ENCODE measurements at regions of chr1 and their contacts with region 1.

Region 1: DNA sequence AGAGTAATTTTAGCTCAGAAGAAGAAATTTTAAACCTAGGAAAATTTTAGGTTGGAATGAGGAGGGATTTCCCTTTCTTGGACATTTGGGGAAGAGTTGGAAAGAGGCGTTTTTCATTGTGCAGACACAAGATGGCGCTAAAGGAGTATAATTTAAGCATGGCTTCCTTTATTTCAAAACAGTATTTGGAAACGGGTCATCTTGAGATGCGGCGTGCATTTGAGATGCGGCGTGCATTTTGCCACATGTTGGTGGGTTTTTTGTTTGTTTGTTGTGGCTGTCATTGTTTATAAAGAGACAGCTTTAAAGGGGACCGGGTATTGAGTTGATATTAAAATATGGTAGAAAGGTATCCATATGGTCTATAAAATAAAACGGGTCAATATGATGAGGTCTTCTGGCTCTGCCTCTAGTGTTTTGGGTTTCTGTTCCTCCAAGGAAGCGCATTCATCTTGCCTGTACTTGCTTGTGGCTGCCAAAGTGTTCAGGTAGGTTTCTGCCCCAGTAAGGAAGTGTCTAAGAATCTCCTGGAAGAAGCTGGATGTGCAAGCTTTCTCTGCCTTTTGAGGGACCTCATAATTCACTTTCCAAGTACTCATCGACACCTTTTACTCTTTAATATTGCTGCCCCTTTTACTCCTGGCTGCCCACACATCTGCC is 210.3 kb downstream of the SLC35F3 start:
- DNase-seq: no peak
- H3K4me3 ChIP-seq: no peak overlapping the region
- H3K27me3 ChIP-seq: no peaks in the 10 kb centered on the region; the same call in 1 of the 2 replicates
- CTCF ChIP-seq: peak; percentile 67

Region 2: DNA sequence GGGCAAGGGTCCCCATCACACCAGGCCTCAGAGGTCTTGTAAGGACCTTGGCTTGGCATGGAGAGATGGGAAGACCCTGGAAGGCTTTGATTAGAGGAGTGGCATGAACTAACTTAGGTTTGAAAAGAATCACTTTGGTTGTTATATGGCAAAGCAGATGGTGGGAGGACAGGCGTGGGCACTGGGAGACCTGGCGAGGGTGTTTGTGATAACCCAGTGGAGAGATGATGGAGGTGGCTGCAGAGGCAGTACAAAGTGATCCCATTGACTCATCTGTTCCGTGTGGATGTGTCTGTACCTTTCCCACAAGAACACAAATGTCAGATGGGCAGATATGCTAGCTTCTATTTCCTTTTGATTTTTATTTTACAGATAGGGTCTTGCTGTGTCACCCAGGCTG is 42.0 kb before region 1 on chr1:
- CTCF ChIA-PET with region 1: no interaction called
- POLR2A ChIA-PET with region 1: no interaction called
- DNase-seq: no peak
- H3K4me3 ChIP-seq: no peak overlapping the region
- H3K27me3 ChIP-seq: no peaks in the 10 kb centered on the region
- CTCF ChIP-seq: no peak

Region 3: GRCh38 chr1:234125283-234125682 is 10.5 kb after region 1 on chr1:
- CTCF ChIA-PET with region 1: interaction called, 26 read pairs
- POLR2A ChIA-PET with region 1: no interaction called
- DNase-seq: no peak
- H3K4me3 ChIP-seq: no peak overlapping the region
- H3K27me3 ChIP-seq: no peaks in the 10 kb centered on the region
- CTCF ChIP-seq: peak; percentile 40; the same call in 1 of the 2 replicates

Region 4: GRCh38 chr1:234186037-234186688 is 71.4 kb after region 1 on chr1:
- CTCF ChIA-PET with region 1: no interaction called
- POLR2A ChIA-PET with region 1: no interaction called
- DNase-seq: no peak
- H3K4me3 ChIP-seq: no peak overlapping the region
- H3K27me3 ChIP-seq: no peaks in the 10 kb centered on the region; the same call in 1 of the 2 replicates
- CTCF ChIP-seq: no peak

Measured in BJ (cell line).